ENCODE measurements at regions of chr1 and their contacts with region 1.

Region 1: GRCh38 chr1:200479816-200480215 is 70.0 kb upstream of the ZNF281 start:
- DNase-seq: no peak
- H3K4me3 ChIP-seq: no peak overlapping the region
- H3K27ac ChIP-seq: no peak overlapping the region
- H3K4me1 ChIP-seq: no peaks in the 10 kb centered on the region
- H3K27me3 ChIP-seq: no peaks in the 10 kb centered on the region
- CTCF ChIP-seq: no peak
- POLR2A ChIP-seq: no peak

Region 2: GRCh38 chr1:200448034-200448762 is 31.6 kb before region 1 on chr1:
- intact Hi-C with region 1: loop called (anchors 1 kb)
- DNase-seq: no peak
- H3K4me3 ChIP-seq: no peak overlapping the region
- H3K27ac ChIP-seq: no peak overlapping the region
- H3K4me1 ChIP-seq: no peaks in the 10 kb centered on the region
- H3K27me3 ChIP-seq: no peaks in the 10 kb centered on the region
- CTCF ChIP-seq: no peak
- POLR2A ChIP-seq: no peak

Region 3: GRCh38 chr1:201019321-201019977 is 539.6 kb after region 1 on chr1:
- intact Hi-C with region 1: no loop called
- DNase-seq: peak in 1 of 2 donors; percentile 40
- H3K4me3 ChIP-seq: no peak overlapping the region
- H3K27ac ChIP-seq: no peak overlapping the region
- H3K4me1 ChIP-seq: no peaks in the 10 kb centered on the region
- H3K27me3 ChIP-seq: peaks cover 0 to 4% of the 10 kb centered on the region in 2 donors
- CTCF ChIP-seq: no peak
- POLR2A ChIP-seq: no peak

Measured in breast epithelium (tissue), 4 donors.